Mucosa of descending colon (tissue), 3 donors: ENCODE measurements at regions of chr6 and their contacts with region 1.

Region 1: DNA sequence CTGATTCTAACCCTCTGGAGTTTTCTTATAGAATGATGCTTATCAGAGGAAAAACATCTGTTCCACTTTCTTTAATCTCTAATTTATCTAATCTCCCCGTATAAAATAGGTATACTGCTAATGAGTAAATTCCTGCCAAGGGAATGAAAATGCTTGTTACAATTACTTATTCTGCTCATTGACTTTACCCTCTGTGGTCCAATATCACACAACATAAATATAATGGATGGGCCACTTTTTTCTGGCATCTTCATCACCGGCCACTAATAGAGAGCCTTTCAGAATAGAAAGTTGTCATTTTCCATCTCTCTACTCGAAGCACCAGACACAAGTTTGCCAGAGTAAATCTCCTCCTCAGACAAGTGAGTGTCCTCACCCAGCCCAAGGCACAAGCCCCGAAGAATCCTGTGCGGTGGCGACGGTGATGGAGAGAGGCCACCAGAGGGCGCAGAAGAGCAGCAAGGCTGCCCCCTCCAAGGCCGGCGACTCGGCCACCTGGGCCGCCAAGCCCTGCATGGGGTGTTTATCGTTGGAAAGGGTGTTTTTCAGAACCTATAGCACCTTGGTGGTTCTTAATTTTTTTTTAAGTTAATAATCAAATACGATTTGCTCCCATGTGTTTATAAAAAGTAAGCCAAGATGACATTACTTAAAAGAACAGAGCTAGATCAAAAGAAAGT is 212.9 kb upstream of the ARID1B start:
- DNase-seq: peak; percentile 74 to 87 (median 86)
- ATAC-seq: peak; percentile 98
- H3K4me3 ChIP-seq: no peak overlapping the region
- H3K4me1 ChIP-seq: no peaks in the 10 kb centered on the region
- CTCF ChIP-seq: peak; percentile 90

Region 2: DNA sequence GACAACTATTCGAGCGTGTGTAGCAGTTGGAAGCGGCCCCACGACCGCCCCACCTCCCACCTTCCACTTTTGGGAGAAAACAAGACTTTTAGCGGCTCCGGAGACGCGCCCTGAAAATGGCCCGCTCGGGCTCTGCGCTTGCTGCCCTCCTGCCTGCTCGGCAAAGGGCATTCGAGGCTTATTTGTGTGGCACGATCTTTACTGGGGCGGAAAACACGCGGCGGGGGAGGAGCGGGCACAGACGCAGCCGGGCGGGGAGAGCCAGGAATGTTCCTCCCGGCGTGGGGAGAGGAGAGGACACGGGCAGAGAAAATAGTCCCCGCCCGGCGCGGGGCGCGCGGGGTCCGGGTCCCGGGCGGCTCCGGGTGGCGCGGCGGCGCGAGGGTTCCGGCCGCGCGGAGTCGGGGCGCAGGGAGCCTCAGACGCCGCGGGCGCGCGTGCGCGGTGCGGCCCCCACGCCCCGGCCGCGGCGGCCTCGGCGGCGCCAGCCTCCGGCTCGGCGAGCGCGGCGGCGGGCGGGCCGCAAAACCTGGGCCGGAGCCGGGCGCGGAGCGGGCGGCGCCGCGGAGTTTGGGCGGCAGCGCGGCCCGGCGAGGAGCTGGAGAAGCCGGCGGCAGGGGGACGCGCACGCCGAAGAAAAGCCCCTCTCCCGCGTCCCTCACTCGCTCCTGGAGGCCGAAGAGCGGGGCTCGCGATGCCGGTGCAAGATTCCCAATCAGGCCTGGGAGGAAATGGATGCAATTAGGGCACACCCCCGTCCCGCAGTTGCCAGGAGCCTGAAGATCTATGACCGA is 122.9 kb after region 1 on chr6:
- intact Hi-C with region 1: loop called in 1 of 2 experiments (anchors 10 kb)
- DNase-seq: peak; percentile 87 to 93 (median 90)
- ATAC-seq: peak; percentile 89
- H3K4me3 ChIP-seq: peak overlapping the region; percentile 38
- H3K4me1 ChIP-seq: peaks cover 10% of the 10 kb centered on the region
- CTCF ChIP-seq: no peak